Calu3 (cell line): ENCODE measurements at regions of chr12 and their contacts with region 1.

Region 1: GRCh38 chr12:97513918-97514317 is 51.3 kb downstream of the RMST start:
- DNase-seq: no peak
- H3K4me3 Mint-ChIP-seq: no peak overlapping the region
- H3K27ac Mint-ChIP-seq: no peak overlapping the region
- H3K4me1 Mint-ChIP-seq: no peaks in the 10 kb centered on the region
- H3K27me3 Mint-ChIP-seq: no peaks in the 10 kb centered on the region
- CTCF ChIP-seq: no peak

Region 2: DNA sequence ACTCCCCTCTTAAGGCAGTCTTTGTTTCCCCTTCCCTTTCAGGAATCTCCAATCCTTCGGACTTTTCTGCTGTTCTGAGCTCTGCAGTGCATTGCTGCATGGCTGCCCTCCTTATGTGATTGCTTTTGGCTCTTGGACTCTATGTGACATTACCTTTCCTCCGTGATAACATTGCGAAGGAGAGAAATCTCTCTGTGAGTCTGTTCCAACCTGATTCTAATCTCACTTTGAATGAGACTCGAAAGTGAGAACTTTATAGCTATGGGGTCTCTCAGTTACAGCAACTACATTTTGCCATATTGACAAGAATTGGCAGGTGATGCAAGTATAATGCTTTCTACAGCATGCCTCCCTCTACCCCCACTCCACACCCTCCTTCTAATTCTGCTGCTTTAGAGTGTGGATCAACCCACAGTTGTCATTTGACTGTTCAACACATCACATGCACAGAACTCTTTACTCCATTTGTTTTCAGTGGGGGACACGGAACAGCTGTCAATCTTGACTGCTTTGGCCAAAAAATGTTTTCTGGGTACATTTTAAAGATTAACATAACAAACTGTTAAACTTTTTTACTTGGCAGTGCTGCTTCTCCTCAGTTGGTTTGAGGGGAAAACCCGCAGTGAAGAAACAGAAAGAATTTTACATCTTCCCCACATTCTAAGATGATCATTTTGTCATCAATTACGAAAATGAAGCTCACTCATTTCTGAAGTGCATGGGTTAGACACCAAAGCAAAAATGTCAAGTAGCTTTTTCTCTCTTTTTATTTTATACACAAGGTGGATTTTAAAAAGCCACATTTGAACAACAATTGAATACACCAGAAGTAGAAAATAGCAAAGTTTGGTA is 176.8 kb before region 1 on chr12:
- CTCF ChIA-PET with region 1: no interaction called
- intact Hi-C with region 1: no loop called
- DNase-seq: no peak
- H3K4me3 Mint-ChIP-seq: no peak overlapping the region
- H3K27ac Mint-ChIP-seq: no peak overlapping the region
- H3K4me1 Mint-ChIP-seq: no peaks in the 10 kb centered on the region
- H3K27me3 Mint-ChIP-seq: peaks cover 11% of the 10 kb centered on the region
- CTCF ChIP-seq: no peak

Region 3: DNA sequence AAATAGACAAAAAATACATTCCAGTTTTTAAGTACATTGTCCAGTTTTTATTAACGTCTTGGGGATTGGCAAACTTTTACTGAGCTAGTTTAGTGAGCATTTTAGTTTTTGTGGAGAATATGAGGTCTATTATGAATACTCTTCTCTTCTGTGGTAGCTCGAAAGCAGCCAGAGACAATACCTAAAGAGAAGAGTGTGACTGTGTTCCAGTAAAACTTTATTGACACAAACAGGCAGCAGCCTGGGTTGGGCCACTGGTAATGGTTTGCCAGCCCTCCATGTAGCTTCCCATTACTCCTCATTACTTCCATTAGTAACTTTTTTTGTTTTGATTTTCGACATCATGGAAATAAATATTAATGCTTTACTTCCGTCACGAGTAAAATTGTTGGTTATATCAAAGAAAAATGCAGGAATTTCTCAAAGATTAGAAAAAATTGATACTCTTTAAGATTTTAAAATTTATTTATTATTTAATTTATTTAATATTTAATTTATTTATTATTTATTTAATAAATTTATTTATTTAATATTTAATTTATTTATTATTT is 31.7 kb before region 1 on chr12:
- CTCF ChIA-PET with region 1: no interaction called
- intact Hi-C with region 1: loop called (anchors 1 kb)
- DNase-seq: no peak
- H3K4me3 Mint-ChIP-seq: no peak overlapping the region
- H3K27ac Mint-ChIP-seq: no peak overlapping the region
- H3K4me1 Mint-ChIP-seq: no peaks in the 10 kb centered on the region
- H3K27me3 Mint-ChIP-seq: no peaks in the 10 kb centered on the region
- CTCF ChIP-seq: no peak

Region 4: GRCh38 chr12:97535582-97535981 is 21.7 kb after region 1 on chr12:
- CTCF ChIA-PET with region 1: no interaction called
- intact Hi-C with region 1: no loop called
- DNase-seq: no peak
- H3K4me3 Mint-ChIP-seq: no peak overlapping the region
- H3K27ac Mint-ChIP-seq: no peak overlapping the region
- H3K4me1 Mint-ChIP-seq: no peaks in the 10 kb centered on the region
- H3K27me3 Mint-ChIP-seq: no peaks in the 10 kb centered on the region
- CTCF ChIP-seq: no peak

Region 5: GRCh38 chr12:98126637-98127335 is 612.9 kb after region 1 on chr12:
- CTCF ChIA-PET with region 1: no interaction called
- intact Hi-C with region 1: loop called (anchors 5 kb)
- DNase-seq: peak; percentile 29
- H3K4me3 Mint-ChIP-seq: no peak overlapping the region
- H3K27ac Mint-ChIP-seq: peak overlapping the region; percentile 4
- H3K4me1 Mint-ChIP-seq: peaks cover 20% of the 10 kb centered on the region
- H3K27me3 Mint-ChIP-seq: no peaks in the 10 kb centered on the region
- CTCF ChIP-seq: no peak

Region 6: GRCh38 chr12:98345308-98345876 is 831.5 kb after region 1 on chr12:
- CTCF ChIA-PET with region 1: no interaction called
- intact Hi-C with region 1: no loop called
- DNase-seq: no peak
- H3K4me3 Mint-ChIP-seq: no peak overlapping the region
- H3K27ac Mint-ChIP-seq: no peak overlapping the region
- H3K4me1 Mint-ChIP-seq: no peaks in the 10 kb centered on the region
- H3K27me3 Mint-ChIP-seq: peaks cover 14% of the 10 kb centered on the region
- CTCF ChIP-seq: no peak